ENCODE measurements at regions of chr7 and their contacts with region 1.

Region 1: GRCh38 chr7:96709381-96710228 is at the start of gene SEM1:
- DNase-seq: no peak
- H3K4me3 ChIP-seq: peak within 1 kb of the TSS; percentile 68 to 89
- H3K27ac ChIP-seq: peak within 1 kb of the TSS; percentile 76
- H3K4me1 ChIP-seq: peaks cover 30% of the 10 kb centered on the region
- H3K27me3 ChIP-seq: no peaks in the 10 kb centered on the region
- CTCF ChIP-seq: no peak
- POLR2A ChIP-seq: no peak
- total RNA-seq, gene SEM1: 17.2 TPM

Region 2: GRCh38 chr7:95396136-95397032 is 1313.2 kb before region 1 on chr7 and contains the start of gene PON3:
- intact Hi-C with region 1: loop called (anchors 5 kb)
- DNase-seq: no peak
- H3K4me3 ChIP-seq: peak within 1 kb of the TSS; percentile 40 to 44
- H3K27ac ChIP-seq: no peak within 1 kb of the TSS
- H3K4me1 ChIP-seq: no peaks in the 10 kb centered on the region
- H3K27me3 ChIP-seq: no peaks in the 10 kb centered on the region
- CTCF ChIP-seq: no peak
- POLR2A ChIP-seq: no peak
- total RNA-seq, gene PON3: 3.9 TPM

Region 3: DNA sequence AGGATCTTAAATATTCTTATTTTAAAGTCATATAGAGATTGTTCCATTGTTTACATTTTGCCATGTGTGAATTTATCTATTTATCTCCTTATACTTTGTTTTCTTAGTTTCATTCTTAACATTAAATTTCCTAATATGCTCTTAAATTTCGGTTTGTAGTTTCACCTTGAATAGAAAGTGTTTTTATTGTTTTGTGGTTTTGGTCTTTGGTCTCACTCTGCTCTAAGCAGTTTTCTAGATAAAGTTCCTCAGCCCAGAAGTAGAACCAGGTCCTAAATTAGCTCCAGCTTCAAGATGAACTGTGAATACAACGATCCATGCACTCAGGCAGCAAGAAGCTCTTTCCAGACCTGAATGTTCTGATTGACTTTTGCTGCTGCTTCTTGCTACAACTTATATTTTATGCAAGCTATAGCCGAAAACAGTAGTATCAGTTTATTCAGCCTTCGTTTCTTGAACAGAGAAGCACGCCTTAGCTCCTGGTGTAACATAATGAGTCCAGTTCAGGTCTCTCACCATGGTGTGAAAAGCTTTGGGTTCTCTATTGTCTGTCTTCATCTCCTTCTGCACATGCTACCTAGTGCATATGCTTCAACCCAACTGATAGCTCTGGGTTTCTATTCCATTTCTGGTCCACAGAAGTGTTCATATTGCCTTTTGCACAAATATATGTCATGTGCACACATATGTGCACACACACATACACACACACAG is 95.3 kb before region 1 on chr7:
- intact Hi-C with region 1: no loop called
- DNase-seq: no peak
- H3K4me3 ChIP-seq: no peak overlapping the region
- H3K27ac ChIP-seq: no peak overlapping the region
- H3K4me1 ChIP-seq: no peaks in the 10 kb centered on the region
- H3K27me3 ChIP-seq: no peaks in the 10 kb centered on the region
- CTCF ChIP-seq: no peak
- POLR2A ChIP-seq: no peak

Measured in vagina (tissue), 2 donors.